ENCODE measurements at regions of chr3 and their contacts with region 1.

Region 1: DNA sequence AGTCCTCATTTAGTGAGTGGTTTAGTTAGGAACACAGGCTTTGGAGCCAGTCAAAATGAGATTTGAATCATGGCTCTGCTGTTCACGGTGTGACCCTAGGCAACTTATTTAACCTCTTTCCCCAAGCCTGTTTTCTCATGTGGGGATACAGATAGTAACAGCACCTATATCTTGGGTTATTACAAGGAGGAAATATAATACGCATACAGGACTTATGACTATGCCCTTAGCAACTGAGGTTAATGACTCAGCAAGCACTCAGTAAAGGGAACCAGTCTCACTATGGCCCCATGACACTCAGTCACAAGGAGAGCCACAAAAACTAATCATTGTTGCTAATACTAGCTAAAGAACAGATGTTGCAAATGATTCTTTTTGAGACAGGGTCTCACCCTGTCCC is 45.9 kb downstream of the SUMF1 start:
- DNase-seq: no peak
- H3K4me3 Mint-ChIP-seq: no peak overlapping the region
- H3K27ac Mint-ChIP-seq: peak overlapping the region; percentile 83
- H3K4me1 Mint-ChIP-seq: peaks cover 23% of the 10 kb centered on the region
- H3K27me3 Mint-ChIP-seq: no peaks in the 10 kb centered on the region

Region 2: DNA sequence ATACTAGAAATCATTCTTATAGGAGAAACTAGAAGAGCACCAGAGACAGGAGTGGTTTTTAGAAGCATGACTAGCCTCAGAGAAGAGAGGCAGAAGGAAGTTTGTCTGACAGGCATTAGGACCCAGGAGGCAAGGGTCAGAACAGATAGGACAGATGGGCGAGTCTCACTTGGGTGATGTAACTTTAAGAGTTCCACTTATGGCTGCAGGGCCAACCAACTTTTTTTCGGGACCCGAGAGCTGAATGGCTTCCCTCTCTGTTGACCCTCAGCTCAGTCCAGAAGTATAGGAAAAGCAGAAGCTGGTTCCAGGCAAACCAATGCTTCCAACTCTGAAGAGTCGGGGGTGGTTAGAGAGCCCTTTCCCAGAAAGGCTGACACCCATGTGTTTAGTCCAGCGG is 254.6 kb before region 1 on chr3:
- intact Hi-C with region 1: no loop called
- DNase-seq: no peak
- H3K4me3 Mint-ChIP-seq: no peak overlapping the region
- H3K27ac Mint-ChIP-seq: no peak overlapping the region
- H3K4me1 Mint-ChIP-seq: no peaks in the 10 kb centered on the region
- H3K27me3 Mint-ChIP-seq: no peaks in the 10 kb centered on the region

Region 3: DNA sequence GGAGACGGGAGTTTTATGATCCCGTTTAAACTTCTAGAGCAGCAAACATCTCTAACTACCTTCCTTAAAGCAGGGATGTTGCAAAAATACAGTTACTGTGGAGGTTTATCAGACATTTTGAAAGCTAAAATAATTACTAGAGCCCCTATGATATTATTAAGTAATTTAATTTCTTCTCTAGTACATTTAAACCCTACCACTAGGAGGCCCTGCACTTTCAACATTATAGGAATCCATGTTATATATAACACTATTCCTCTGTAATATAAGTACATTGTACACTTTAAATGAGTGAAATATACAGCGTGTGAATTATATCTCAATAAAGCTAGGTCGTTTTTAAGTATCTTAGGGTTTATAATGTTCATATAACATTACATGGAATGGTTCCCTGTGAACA is 106.4 kb before region 1 on chr3:
- intact Hi-C with region 1: no loop called
- DNase-seq: no peak
- H3K4me3 Mint-ChIP-seq: no peak overlapping the region
- H3K27ac Mint-ChIP-seq: no peak overlapping the region
- H3K4me1 Mint-ChIP-seq: peaks cover 3% of the 10 kb centered on the region
- H3K27me3 Mint-ChIP-seq: no peaks in the 10 kb centered on the region

Region 4: GRCh38 chr3:4387210-4388204 is 33.6 kb before region 1 on chr3:
- intact Hi-C with region 1: loop called (anchors 1 kb)
- DNase-seq: peak; percentile 48
- H3K4me3 Mint-ChIP-seq: peak overlapping the region; percentile 1
- H3K27ac Mint-ChIP-seq: peak overlapping the region; percentile 84
- H3K4me1 Mint-ChIP-seq: peaks cover 35% of the 10 kb centered on the region
- H3K27me3 Mint-ChIP-seq: no peaks in the 10 kb centered on the region

Region 5: DNA sequence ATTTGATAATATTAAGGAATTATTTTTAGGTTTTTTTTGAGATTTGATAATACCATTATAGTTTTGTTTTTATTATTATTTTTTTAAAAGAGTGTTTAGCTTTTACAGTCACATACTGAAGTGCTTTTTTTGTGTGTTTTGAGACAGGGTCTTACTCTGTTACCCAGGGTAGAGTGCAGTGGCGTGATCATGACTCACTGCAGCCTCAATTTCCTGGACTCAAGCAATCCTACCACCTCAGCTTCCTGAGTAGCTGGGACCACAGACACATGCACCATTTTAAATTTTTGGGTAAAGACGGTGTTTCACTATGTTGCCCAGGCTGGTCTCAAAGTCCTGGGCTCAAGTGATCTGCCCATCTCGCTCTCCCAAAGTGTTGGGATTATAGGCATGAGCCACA is 27.1 kb before region 1 on chr3:
- intact Hi-C with region 1: loop called (anchors 1 kb)
- DNase-seq: peak; percentile 75
- H3K4me3 Mint-ChIP-seq: peak overlapping the region; percentile 20
- H3K27ac Mint-ChIP-seq: peak overlapping the region; percentile 78
- H3K4me1 Mint-ChIP-seq: peaks cover 43% of the 10 kb centered on the region
- H3K27me3 Mint-ChIP-seq: no peaks in the 10 kb centered on the region

Region 6: DNA sequence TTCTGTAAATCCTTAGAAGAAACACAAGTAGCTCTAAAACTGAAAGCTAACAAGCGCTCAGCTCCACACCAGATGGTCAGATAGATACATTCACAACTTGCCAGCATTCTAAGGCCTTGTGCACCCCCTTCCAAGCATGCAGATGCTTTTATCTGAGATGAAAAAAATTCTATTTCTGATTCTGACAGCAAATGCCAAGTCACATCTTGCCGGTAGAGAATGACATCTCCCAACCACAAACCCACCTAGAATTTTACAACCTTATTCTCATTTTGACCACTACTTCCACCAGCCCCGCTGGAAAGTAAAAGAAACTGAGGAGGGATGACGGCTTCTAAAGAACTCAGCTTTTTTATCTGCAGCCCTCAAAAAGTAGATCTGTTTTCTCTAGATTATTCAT is 11.7 kb before region 1 on chr3:
- intact Hi-C with region 1: loop called (anchors 1 kb)
- DNase-seq: peak; percentile 71
- H3K4me3 Mint-ChIP-seq: peak overlapping the region; percentile 57
- H3K27ac Mint-ChIP-seq: peak overlapping the region; percentile 87
- H3K4me1 Mint-ChIP-seq: peaks cover 43% of the 10 kb centered on the region
- H3K27me3 Mint-ChIP-seq: no peaks in the 10 kb centered on the region

Region 7: GRCh38 chr3:4466741-4467521 is 45.8 kb after region 1 on chr3 and contains the start of gene SUMF1:
- intact Hi-C with region 1: loop called (anchors 2 kb)
- DNase-seq: peak; percentile 93
- H3K4me3 Mint-ChIP-seq: peak within 1 kb of the TSS; percentile 92
- H3K27ac Mint-ChIP-seq: peak within 1 kb of the TSS; percentile 96
- H3K4me1 Mint-ChIP-seq: peaks cover 12% of the 10 kb centered on the region
- H3K27me3 Mint-ChIP-seq: peaks cover under 1% of the 10 kb centered on the region
- total RNA-seq, gene SUMF1: 6.7 and 7.4 TPM in 2 replicates

Region 8: GRCh38 chr3:4571690-4572334 is 150.7 kb after region 1 on chr3:
- intact Hi-C with region 1: no loop called
- DNase-seq: no peak
- H3K4me3 Mint-ChIP-seq: no peak overlapping the region
- H3K27ac Mint-ChIP-seq: no peak overlapping the region
- H3K4me1 Mint-ChIP-seq: peaks cover 12% of the 10 kb centered on the region
- H3K27me3 Mint-ChIP-seq: no peaks in the 10 kb centered on the region

Region 9: DNA sequence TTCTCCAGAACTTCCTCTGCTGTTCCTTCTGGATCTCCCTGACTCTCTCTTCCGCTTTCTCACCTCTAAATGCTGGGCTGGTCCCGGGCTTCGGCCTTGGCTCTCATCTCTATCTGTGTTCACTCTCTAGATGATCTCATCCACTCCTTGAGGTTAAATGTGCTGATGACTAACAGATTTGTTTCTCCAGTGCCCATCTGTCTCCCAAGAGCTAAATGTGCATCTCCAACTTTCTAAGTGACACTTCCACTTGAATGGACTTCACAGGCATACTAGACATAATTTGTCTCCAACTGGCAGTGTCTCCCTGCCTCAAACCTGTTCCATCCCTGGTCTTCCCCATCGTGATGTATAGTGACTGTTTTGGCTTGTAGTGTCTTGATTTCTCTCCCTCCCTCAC is 167.3 kb after region 1 on chr3:
- intact Hi-C with region 1: no loop called
- DNase-seq: no peak
- H3K4me3 Mint-ChIP-seq: no peak overlapping the region
- H3K27ac Mint-ChIP-seq: peak overlapping the region; percentile 12
- H3K4me1 Mint-ChIP-seq: peaks cover 27% of the 10 kb centered on the region
- H3K27me3 Mint-ChIP-seq: no peaks in the 10 kb centered on the region

Region 10: GRCh38 chr3:5194341-5195159 is 773.4 kb after region 1 on chr3:
- intact Hi-C with region 1: loop called (anchors 5 kb)
- DNase-seq: peak; percentile 85
- H3K4me3 Mint-ChIP-seq: peak overlapping the region; percentile 79
- H3K27ac Mint-ChIP-seq: peak overlapping the region; percentile 94
- H3K4me1 Mint-ChIP-seq: peaks cover 85% of the 10 kb centered on the region
- H3K27me3 Mint-ChIP-seq: no peaks in the 10 kb centered on the region

Measured in activated CD4-positive, alpha-beta T cell treated with anti-CD3 and anti-CD28 coated beads, Interleukin-2, amount 10 ng/mL, durations not matched to agents 24 days and 14 days (primary cell).